Posterior cingulate gyrus (tissue), 11 donors: ENCODE measurements at regions of chr3 and their contacts with region 1.

Region 1: DNA sequence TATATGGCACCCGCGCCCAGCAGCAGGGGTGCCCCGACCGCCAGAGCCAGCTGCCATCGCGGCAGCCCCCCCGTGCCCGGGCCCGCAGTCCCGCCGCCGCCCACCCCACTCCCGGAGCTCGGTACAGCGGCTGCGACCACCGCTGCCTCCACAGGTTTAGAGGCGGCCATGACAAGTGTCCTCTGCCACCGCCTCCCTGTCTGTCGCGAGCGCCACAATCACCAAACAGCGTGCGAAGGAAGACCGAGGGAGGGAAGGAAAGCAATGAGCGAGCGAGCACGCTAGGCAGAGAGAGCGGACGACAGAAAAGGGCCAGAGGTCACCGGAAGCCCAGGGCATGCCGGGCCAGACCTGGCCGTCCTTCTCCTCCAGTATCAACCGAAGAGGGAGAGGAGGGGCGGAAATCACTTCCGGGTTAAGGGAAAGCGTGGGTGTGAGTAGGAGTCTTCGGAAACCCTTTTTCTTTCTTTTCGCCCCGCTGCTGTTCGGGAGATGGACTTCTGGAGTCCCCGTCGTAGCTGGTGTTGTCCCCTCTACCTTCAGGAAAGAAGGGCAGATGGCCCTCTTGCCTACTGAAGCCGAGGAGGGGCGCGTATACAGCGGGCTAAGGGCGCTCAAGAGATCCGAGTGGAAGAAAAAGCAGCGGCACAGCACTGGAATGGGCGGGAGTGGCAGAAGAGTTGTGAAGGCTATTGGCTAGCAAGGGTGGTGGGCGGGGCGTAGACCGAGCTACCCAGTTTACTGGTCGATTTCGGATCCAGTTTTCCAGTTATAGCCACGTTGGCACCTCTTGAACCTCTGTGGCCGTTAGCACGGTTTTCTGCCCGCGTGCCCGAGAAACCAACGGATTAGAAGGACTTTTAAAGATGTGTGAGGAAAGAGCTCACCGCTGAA is at the starts of genes LNP1 and TOMM70:
- DNase-seq: peak; percentile 94 to 99 (median 97)

Region 2: DNA sequence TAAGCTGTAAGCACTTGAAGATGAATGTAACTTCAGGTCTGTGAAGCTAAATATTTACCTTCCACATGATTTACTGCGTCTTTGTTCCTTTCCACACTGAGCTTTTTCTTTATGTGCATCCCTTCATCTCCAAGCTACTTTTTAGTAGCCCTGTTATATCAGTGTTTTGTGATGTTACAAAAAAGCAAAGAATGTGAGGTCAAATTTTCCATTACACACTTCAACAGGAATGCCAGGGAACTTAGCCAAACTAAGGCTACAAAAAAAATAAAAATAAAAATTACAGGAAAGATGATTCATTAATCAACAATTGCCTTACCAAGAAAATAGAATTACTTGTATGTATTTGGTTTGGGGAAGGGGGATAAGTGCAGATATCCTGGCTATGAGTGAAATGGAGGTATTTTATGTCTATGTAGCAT is 359.7 kb before region 1 on chr3:
- intact Hi-C with region 1: no loop called
- DNase-seq: no peak

Region 3: DNA sequence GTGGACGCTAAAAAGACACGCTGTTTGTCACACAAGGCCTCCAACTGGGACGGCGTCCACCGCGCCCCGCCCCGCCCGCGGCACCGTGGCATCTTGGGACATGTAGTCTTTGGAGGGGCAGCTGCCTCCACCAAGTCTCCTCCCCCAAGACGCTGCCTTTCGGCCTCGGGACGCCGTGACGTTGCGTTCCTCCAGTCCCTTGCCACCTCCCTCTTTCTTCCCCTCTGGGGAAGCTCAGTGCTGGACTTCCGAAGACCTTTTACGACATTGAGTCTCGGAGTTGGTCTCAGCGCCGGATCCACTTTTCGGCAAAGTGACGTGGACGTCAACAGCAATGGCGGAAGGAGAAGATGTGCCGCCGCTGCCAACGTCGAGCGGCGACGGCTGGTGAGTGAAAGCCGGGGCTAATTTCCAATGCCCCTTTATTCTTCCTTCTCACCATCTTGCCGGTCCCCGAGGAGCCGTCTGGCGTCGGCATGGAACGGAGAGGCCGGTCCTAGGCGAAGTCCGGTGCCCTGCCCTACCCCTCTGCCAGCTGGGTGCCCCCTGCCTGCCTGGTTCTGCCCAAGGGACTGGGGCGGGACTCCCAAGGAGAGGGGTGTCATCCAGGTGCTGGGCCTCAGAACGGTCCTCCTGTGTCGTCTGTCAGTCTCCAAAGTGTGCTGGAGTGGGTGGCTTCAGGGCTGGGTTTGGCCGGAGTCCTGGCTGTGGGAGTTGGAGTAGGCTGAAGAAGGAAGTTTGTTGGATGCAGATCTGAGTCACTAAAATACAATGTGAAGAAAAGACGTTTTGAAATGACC is 140.1 kb before region 1 on chr3 and contains the start of gene TBC1D23:
- intact Hi-C with region 1: loop called (anchors 5 kb)
- DNase-seq: peak; percentile 96 to 100 (median 99)

Region 4: GRCh38 chr3:100492059-100493006 is 91.3 kb after region 1 on chr3 and contains the start of gene TMEM45A:
- intact Hi-C with region 1: loop called (anchors 2 kb)
- DNase-seq: peak; percentile 87 to 99 (median 95)

Region 5: DNA sequence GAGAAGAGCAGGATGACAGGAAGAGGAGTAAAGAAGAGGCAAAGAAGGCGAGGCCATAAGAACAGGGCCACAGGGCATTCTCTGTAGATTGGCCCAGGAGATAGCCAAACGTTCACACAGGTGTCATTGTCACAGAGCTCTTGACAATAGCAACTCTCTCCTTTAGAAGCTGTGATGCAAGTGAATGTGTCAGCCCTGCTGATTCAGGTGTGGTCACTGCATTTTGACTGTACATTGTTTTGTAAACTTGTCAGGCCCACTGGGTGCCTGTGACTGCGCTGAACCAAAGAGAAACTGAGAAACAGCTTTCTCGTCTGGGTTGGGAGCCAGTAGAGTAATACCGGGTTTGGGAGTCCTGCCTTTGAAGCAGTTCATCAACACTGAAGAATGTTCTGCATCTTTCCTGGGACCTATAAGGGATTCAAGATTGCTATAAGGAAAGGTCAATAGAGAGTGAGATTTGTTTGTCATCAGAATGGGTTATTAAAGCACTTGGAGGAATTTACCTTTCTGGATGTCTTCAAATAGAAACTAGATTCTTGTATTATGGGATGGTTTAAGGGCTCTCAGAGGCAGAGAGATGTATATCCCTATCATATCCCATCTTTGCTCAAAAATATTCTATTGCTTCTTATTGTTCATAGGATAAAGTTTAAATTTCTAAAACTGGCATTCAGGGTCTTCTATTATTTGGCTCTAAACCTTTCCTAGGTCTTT is 136.8 kb after region 1 on chr3:
- intact Hi-C with region 1: no loop called
- DNase-seq: no peak